ENCODE measurements at regions of chr11 and their contacts with region 1.

Region 1: GRCh38 chr11:75388386-75389275 is 10.7 kb upstream of the RPS3 start:
- DNase-seq: no peak
- ATAC-seq: peak; percentile 92
- H3K4me3 ChIP-seq: no peak overlapping the region
- H3K27ac ChIP-seq: no peak overlapping the region
- H3K4me1 ChIP-seq: peaks cover 3% of the 10 kb centered on the region; the same call in 1 of the 2 replicates
- H3K27me3 ChIP-seq: no peaks in the 10 kb centered on the region; a peak in 1 of 4 replicates
- CTCF ChIP-seq: peak; percentile 77 to 92 (median 80)
- EP300 ChIP-seq: no peak
- POLR2A ChIP-seq: no peak
- RAD21 ChIP-seq: peak; percentile 77

Region 2: DNA sequence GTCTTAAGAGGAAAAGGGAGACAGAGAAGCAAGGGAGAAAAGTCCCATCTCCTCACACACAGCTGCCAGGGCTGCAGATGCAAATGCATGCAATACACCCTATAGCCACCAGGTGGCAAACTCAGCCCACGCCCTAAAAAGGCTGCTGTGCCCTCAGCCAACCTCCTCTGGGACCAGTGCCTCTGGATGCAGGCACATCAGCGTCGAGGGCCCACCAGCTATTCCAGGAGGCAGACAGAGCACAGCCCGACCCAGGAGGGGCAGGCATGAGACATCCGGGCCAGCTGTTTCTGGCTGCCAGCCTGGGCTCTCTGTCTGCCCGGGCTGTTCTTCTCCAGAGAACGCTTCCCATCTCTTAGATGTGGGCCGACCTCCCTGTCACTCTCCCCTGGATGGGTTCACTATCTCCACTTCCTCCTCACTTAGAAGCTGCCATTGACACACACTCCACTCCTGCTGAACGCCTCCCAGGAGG is 108.4 kb before region 1 on chr11:
- CTCF ChIA-PET with region 1: interaction called, 406 read pairs
- POLR2A ChIA-PET with region 1: no interaction called
- RAD21 ChIA-PET with region 1: interaction called, 118 read pairs
- SMC1A ChIA-PET with region 1: interaction called, 89 read pairs
- in situ Hi-C with region 1: loop called (anchors 5 kb)
- intact Hi-C with region 1: loop called (anchors 1 kb)
- DNase-seq: peak; percentile 16
- ATAC-seq: peak; percentile 98
- H3K4me3 ChIP-seq: no peak overlapping the region
- H3K27ac ChIP-seq: no peak overlapping the region
- H3K4me1 ChIP-seq: no peaks in the 10 kb centered on the region
- H3K27me3 ChIP-seq: no peaks in the 10 kb centered on the region; a peak in 1 of 4 replicates
- CTCF ChIP-seq: peak; percentile 93 to 96 (median 93)
- EP300 ChIP-seq: no peak
- POLR2A ChIP-seq: no peak
- RAD21 ChIP-seq: peak; percentile 90

Region 3: GRCh38 chr11:75342903-75343870 is 45.4 kb before region 1 on chr11:
- CTCF ChIA-PET with region 1: interaction called, 64 read pairs
- POLR2A ChIA-PET with region 1: no interaction called
- RAD21 ChIA-PET with region 1: interaction called, 14 read pairs
- SMC1A ChIA-PET with region 1: interaction called, 16 read pairs
- in situ Hi-C with region 1: no loop called
- intact Hi-C with region 1: no loop called
- DNase-seq: no peak
- ATAC-seq: no peak
- H3K4me3 ChIP-seq: no peak overlapping the region
- H3K27ac ChIP-seq: no peak overlapping the region
- H3K4me1 ChIP-seq: peaks cover 62% of the 10 kb centered on the region
- H3K27me3 ChIP-seq: no peaks in the 10 kb centered on the region
- CTCF ChIP-seq: no peak
- EP300 ChIP-seq: no peak
- POLR2A ChIP-seq: no peak
- RAD21 ChIP-seq: no peak

Region 4: GRCh38 chr11:75399344-75400145 is 10.9 kb after region 1 on chr11 and contains the start of gene RPS3:
- CTCF ChIA-PET with region 1: interaction called, 15 read pairs
- POLR2A ChIA-PET with region 1: interaction called, 3 read pairs
- RAD21 ChIA-PET with region 1: no interaction called
- SMC1A ChIA-PET with region 1: interaction called, 3 read pairs
- in situ Hi-C with region 1: no loop called
- intact Hi-C with region 1: no loop called
- DNase-seq: peak; percentile 72
- ATAC-seq: peak; percentile 90
- H3K4me3 ChIP-seq: peak within 1 kb of the TSS; percentile 88
- H3K27ac ChIP-seq: peak within 1 kb of the TSS; percentile 98
- H3K4me1 ChIP-seq: no peaks in the 10 kb centered on the region; the same call in 1 of the 2 replicates
- H3K27me3 ChIP-seq: peaks cover 0 to 3% of the 10 kb centered on the region in 2 experiments; a peak in 1 of 4 replicates
- CTCF ChIP-seq: peak in 2 of 3 experiments; percentile 17; a peak in 3 of 6 replicates
- EP300 ChIP-seq: peak in 1 of 2 experiments; percentile 54; a peak in 1 of 4 replicates
- POLR2A ChIP-seq: peak; percentile 100
- RAD21 ChIP-seq: no peak
- polyA plus RNA-seq, gene RPS3: 7,007 to 9,556 TPM

Region 5: GRCh38 chr11:75513250-75513649 is 124.6 kb after region 1 on chr11:
- CTCF ChIA-PET with region 1: no interaction called
- POLR2A ChIA-PET with region 1: no interaction called
- RAD21 ChIA-PET with region 1: no interaction called
- SMC1A ChIA-PET with region 1: no interaction called
- in situ Hi-C with region 1: no loop called
- intact Hi-C with region 1: no loop called
- DNase-seq: no peak
- ATAC-seq: no peak
- H3K4me3 ChIP-seq: no peak overlapping the region
- H3K27ac ChIP-seq: no peak overlapping the region
- H3K4me1 ChIP-seq: peaks cover 19% of the 10 kb centered on the region
- H3K27me3 ChIP-seq: no peaks in the 10 kb centered on the region; a peak in 1 of 4 replicates
- CTCF ChIP-seq: no peak
- EP300 ChIP-seq: no peak
- POLR2A ChIP-seq: no peak
- RAD21 ChIP-seq: no peak

Region 6: DNA sequence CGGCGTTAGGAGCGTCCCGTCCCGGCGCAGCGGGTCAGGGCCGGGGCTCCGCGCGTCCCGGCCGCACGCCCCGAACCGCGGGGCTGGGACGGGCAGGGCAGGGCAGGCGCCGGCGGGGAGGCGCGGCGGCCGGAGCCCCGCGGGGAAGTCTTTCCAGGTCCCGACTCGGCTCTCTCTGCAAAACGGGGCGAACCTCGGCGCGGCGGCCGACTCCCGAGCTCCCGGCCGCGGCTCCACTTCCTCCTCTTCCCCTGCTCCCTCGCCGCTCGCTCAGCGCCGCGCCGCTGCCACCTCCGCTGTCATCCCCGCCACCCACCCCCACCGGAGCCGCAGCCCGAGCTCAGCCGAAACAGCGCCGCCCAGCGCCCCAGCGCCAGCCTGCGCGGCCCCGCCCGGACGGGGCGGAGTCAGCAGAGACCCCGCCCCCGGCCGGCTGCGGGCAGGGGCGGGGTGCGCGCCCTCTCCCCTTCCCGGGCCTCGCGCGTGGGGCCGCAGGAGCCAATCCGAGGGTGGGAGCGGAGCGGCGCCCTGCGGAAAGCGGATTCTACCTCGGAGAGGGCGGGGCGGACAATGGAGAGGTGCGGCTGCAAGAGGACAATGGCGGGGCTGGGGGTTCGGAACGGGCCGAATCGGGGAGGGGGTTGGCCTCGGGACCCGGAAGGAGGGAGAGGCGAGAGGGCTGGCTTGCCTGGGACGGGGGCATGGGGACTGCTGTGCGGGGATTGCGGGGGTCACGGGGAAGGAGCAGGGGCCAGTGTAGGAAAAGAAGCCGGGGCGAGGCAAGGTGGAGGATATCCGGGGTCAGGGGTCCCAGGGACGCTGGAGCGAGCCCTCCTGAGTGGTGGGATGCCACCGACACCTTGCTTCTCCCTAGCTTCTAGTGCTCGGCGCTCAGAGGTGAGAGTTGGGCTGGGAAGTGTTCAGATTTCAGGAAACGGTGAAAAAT is 137.2 kb after region 1 on chr11 and contains the start of gene GDPD5:
- CTCF ChIA-PET with region 1: interaction called, 68 read pairs
- POLR2A ChIA-PET with region 1: no interaction called
- RAD21 ChIA-PET with region 1: interaction called, 31 read pairs
- SMC1A ChIA-PET with region 1: interaction called, 43 read pairs
- in situ Hi-C with region 1: no loop called
- intact Hi-C with region 1: no loop called
- DNase-seq: no peak
- ATAC-seq: peak; percentile 84
- H3K4me3 ChIP-seq: peak within 1 kb of the TSS; percentile 80
- H3K27ac ChIP-seq: peak within 1 kb of the TSS; percentile 28; the same call in 1 of the 2 replicates
- H3K4me1 ChIP-seq: peaks cover 18% of the 10 kb centered on the region
- H3K27me3 ChIP-seq: 0 out of 4 replicates have a peak, but pooled peaks cover 0 to 3% of the 10 kb centered on the region in 2 experiments
- CTCF ChIP-seq: peak; percentile 55 to 71 (median 59); a peak in 5 of 6 replicates
- EP300 ChIP-seq: no peak
- POLR2A ChIP-seq: peak; percentile 78
- RAD21 ChIP-seq: peak; percentile 49
- polyA plus RNA-seq, gene GDPD5: 0.10 to 0.80 TPM